ENCODE measurements at regions of chr2 and their contacts with region 1.

Region 1: DNA sequence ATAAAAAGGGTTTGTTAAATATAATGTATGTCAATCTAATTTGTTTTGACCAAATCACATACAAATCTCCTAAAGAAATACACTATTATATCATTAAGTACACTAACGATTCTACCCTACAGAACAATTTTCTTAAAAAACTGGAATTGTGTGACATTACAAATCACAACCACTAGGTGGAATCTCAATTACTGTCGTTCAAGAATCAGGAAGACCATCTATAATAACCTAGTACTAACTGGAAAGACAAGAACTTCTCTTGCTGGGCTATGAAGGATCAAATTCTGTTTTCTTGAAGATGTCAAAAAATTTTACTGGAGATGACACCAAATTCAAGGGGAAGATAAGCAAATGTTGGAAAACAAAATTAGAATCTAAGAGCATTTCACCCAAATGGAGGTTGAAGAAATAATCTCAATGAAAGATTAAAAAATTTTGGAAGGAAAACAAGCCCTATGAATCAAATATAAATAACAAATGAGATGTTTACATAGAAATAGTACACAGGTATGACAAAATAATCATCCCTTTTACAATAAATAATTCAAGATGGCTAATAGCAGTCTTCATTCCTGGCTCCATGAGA is 110.9 kb downstream of the STK39 start:
- DNase-seq: peak in 2 of 9 experiments; percentile 49 to 61
- ATAC-seq: peak; percentile 54
- H3K4me3 ChIP-seq: no peak overlapping the region
- H3K4me3 Mint-ChIP-seq: no peak overlapping the region
- H3K27ac ChIP-seq: no peak overlapping the region
- H3K27ac Mint-ChIP-seq: peak overlapping the region; percentile 75
- H3K4me1 ChIP-seq: no peaks in the 10 kb centered on the region
- H3K4me1 Mint-ChIP-seq: peaks cover 5% of the 10 kb centered on the region
- H3K27me3 ChIP-seq: no peaks in the 10 kb centered on the region
- H3K27me3 Mint-ChIP-seq: no peaks in the 10 kb centered on the region
- CTCF ChIP-seq: peak; percentile 65

Region 2: DNA sequence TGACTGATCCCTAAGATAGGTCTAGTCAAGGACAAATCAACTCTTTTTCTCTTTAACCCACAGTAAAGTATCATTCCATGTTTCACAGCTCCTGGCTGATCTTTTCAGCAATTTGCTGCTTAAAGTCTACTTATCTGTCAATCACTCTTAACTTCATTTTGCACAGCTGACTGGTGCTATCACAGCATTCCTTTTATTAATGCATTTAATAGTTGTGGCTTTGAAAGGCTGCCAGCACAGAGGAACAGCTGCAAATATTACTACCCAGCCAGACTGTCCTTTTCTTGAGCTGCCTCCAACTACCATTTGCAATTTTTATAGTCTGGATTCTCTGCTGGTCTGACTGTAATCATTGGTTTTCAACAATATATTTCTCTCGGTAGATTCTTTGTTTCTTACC is 192.6 kb before region 1 on chr2:
- CTCF ChIA-PET with region 1: no interaction called
- POLR2A ChIA-PET with region 1: no interaction called
- intact Hi-C with region 1: no loop called
- DNase-seq: no peak
- ATAC-seq: no peak
- H3K4me3 ChIP-seq: no peak overlapping the region
- H3K4me3 Mint-ChIP-seq: no peak overlapping the region
- H3K27ac ChIP-seq: no peak overlapping the region
- H3K27ac Mint-ChIP-seq: no peak overlapping the region
- H3K4me1 ChIP-seq: no peaks in the 10 kb centered on the region
- H3K4me1 Mint-ChIP-seq: no peaks in the 10 kb centered on the region
- H3K27me3 ChIP-seq: no peaks in the 10 kb centered on the region
- H3K27me3 Mint-ChIP-seq: peaks cover 11% of the 10 kb centered on the region
- CTCF ChIP-seq: no peak

Region 3: GRCh38 chr2:168246483-168247340 is 110.2 kb after region 1 on chr2:
- CTCF ChIA-PET with region 1: no interaction called
- POLR2A ChIA-PET with region 1: no interaction called
- intact Hi-C with region 1: loop called (anchors 1 to 2 kb)
- DNase-seq: peak; percentile 58 to 93 (median 81)
- ATAC-seq: peak; percentile 68
- H3K4me3 ChIP-seq: peak overlapping the region; percentile 57 to 60
- H3K4me3 Mint-ChIP-seq: peak overlapping the region; percentile 89
- H3K27ac ChIP-seq: peak overlapping the region; percentile 69 to 81
- H3K27ac Mint-ChIP-seq: peak overlapping the region; percentile 96
- H3K4me1 ChIP-seq: peaks cover 40% of the 10 kb centered on the region
- H3K4me1 Mint-ChIP-seq: peaks cover 40% of the 10 kb centered on the region
- H3K27me3 ChIP-seq: no peaks in the 10 kb centered on the region
- H3K27me3 Mint-ChIP-seq: no peaks in the 10 kb centered on the region
- CTCF ChIP-seq: no peak

Region 4: DNA sequence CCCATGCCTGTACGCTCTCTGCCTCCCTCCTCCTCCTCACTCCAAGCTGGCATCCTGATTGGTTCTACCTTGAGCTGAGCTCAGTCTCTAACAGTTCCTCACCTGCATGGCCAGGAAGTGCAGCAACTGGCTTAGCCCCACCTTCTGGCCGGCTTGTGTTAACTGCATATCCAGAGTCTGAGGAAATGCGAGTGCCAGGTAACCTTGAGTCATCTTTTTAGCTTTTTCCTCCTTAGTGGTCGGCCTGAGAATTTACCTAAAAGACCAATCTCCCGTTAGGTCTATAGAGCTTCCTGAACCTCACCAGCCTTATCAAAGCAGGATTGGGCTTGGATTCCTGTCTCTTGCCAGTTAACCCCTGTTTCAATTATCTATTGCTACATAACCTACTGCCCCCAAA is 200.4 kb after region 1 on chr2:
- CTCF ChIA-PET with region 1: interaction called, 15 read pairs
- POLR2A ChIA-PET with region 1: no interaction called
- intact Hi-C with region 1: loop called (anchors 1 to 2 kb)
- DNase-seq: peak in 8 of 9 experiments; percentile 28 to 69 (median 60)
- ATAC-seq: peak; percentile 94
- H3K4me3 ChIP-seq: no peak overlapping the region
- H3K4me3 Mint-ChIP-seq: no peak overlapping the region
- H3K27ac ChIP-seq: no peak overlapping the region
- H3K27ac Mint-ChIP-seq: no peak overlapping the region
- H3K4me1 ChIP-seq: no peaks in the 10 kb centered on the region
- H3K4me1 Mint-ChIP-seq: peaks cover 5% of the 10 kb centered on the region
- H3K27me3 ChIP-seq: no peaks in the 10 kb centered on the region
- H3K27me3 Mint-ChIP-seq: no peaks in the 10 kb centered on the region
- CTCF ChIP-seq: peak; percentile 36

Region 5: DNA sequence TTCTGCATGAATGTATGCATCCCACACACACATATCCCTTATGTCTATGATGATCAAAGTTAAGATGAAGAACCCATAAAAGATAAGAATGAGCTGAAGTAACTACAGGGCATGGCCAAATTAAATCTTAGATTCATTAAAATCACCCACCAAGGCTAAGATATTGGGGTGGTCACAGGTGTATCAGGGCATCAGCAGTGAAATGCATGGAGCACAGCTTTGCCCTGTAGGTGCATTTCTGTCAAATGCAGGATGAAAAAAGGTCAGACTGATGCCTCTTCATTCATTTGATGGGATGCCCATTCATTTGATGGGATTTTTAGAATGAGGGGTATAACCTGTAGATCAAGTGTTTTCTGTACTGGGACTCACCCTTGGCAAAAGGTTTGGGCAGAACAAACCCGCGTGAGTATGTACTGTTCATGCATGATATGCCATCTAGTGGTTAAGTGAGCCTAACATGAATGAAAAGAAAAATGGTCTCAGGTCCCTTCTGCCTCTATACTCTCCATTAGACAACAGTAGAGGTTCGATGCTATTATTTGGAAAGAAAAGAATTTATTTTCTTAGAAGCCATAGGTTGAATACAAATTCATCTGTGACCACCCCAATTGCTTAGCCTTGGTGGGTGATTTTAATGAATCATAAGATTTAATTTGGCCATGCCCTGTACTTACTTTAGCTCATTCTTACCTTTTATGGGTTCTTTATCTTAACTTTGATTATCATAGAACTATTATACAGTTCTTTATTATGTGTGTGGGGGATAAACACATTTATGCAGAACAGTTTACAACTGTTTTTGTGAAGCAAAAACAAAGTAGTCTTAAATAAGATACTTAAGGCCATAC is 622.7 kb after region 1 on chr2:
- CTCF ChIA-PET with region 1: interaction called, 4 read pairs
- POLR2A ChIA-PET with region 1: no interaction called
- intact Hi-C with region 1: loop called in 1 of 2 experiments (anchors 10 kb)
- DNase-seq: peak in 4 of 9 experiments; percentile 20 to 71 (median 45)
- ATAC-seq: peak; percentile 81
- H3K4me3 ChIP-seq: no peak overlapping the region
- H3K4me3 Mint-ChIP-seq: no peak overlapping the region
- H3K27ac ChIP-seq: no peak overlapping the region
- H3K27ac Mint-ChIP-seq: peak overlapping the region; percentile 1
- H3K4me1 ChIP-seq: peaks cover 36% of the 10 kb centered on the region
- H3K4me1 Mint-ChIP-seq: peaks cover 48% of the 10 kb centered on the region
- H3K27me3 ChIP-seq: no peaks in the 10 kb centered on the region
- H3K27me3 Mint-ChIP-seq: no peaks in the 10 kb centered on the region
- CTCF ChIP-seq: no peak